Lower leg skin (tissue), 4 donors: ENCODE measurements at regions of chr13 and their contacts with region 1.

Region 1: GRCh38 chr13:101942038-101942437 is 459.8 kb downstream of the FGF14 start:
- DNase-seq: peak in 1 of 2 donors; percentile 22
- H3K4me3 ChIP-seq: no peak overlapping the region
- CTCF ChIP-seq: peak in 1 of 3 donors; percentile 43
- POLR2A ChIP-seq: no peak

Region 2: DNA sequence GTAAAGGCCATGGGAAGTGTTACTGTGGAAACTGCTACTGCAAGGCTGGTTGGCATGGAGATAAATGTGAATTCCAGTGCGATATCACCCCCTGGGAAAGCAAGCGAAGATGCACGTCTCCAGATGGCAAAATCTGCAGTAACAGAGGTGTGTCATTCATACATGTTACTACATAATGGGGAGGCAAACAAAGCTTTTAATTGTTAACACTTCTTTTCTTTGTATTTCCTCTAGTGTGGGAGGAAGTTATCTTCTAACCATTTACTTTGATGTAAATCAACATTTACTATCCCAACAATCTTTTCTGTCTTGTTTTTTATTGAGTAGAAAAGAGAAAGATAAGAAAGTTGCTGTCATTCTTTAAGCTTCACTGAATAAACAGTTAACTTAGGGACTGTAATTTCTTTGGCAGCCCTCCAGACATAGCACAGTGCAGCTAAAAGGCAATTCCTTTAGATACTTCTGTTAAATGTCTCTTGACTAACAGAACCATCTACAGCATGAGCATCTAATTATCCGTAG is 362.7 kb before region 1 on chr13:
- intact Hi-C with region 1: no loop called
- DNase-seq: no peak
- H3K4me3 ChIP-seq: no peak overlapping the region
- CTCF ChIP-seq: no peak
- POLR2A ChIP-seq: no peak

Region 3: GRCh38 chr13:102452831-102453230 is 510.8 kb after region 1 on chr13:
- intact Hi-C with region 1: loop called (anchors 10 kb)
- DNase-seq: no peak
- H3K4me3 ChIP-seq: no peak overlapping the region
- CTCF ChIP-seq: no peak
- POLR2A ChIP-seq: no peak

Region 4: GRCh38 chr13:102555917-102556553 is 614.0 kb after region 1 on chr13:
- intact Hi-C with region 1: loop called (anchors 10 kb)
- DNase-seq: no peak
- H3K4me3 ChIP-seq: no peak overlapping the region
- CTCF ChIP-seq: no peak
- POLR2A ChIP-seq: no peak

Region 5: DNA sequence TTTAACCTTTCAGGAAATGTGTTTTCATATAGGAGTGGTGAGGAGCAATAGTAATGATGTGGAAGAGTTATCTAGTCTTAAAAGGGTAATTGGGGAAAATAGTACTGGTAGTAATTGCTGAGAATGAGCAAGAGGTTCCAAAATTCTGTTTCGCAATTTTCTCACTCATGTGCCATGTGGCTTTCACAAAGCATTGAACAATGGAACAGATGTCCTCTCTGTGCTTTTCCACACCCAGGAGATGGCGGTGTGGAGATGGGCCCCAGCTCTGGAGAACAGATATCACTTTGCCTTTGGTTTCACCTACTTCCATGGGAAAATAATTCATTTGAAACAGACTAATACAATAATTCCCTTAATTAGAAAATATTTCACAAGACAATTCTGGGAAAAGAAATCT is 1294.2 kb after region 1 on chr13:
- intact Hi-C with region 1: no loop called
- DNase-seq: no peak
- H3K4me3 ChIP-seq: no peak overlapping the region
- CTCF ChIP-seq: no peak
- POLR2A ChIP-seq: no peak